ENCODE measurements at regions of chr1 and their contacts with region 1.

Region 1: DNA sequence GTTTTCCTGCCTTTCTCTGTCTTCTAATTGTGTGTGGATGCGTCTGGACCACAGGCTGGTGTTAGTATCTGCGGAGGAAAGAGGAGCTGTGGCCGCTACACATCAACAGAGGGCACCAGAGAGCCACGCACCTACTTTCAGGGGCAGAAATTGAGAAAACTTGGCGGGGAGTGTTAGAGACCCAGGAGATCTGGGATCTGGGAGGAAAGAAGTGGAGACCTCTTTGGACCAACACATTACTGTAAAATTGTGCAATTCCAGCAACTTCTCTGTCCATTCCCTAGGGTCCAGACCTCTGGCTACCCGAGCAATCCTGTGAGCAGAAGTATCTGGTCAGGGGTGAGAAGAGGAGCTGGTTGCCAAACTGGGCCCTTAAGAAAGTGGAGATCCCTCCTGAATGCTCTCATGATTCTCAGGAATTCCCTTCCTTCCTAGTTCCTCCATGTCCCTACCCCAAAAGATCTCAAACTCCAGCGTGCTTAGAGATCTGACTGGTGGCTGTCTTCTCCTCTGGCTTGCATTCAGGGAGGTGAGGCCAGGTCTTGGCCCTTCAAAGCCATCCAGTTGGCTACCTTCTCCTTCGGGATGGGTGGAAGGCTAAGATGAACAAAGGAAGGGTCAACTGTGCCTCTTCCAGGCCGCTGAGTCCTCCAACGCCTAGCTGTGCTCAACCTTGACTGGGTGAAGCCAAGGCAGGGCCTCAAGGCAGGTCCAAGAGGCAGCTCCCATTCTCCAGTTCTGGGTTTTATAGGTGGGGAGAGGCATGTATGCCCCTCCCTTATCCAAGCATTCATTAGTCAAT is 1.2 kb upstream of the KIRREL1 start:
- DNase-seq: peak; percentile 64
- ATAC-seq: peak; percentile 61
- H3K4me3 Mint-ChIP-seq: no peak overlapping the region
- H3K27ac Mint-ChIP-seq: no peak overlapping the region
- H3K4me1 Mint-ChIP-seq: no peaks in the 10 kb centered on the region
- H3K27me3 Mint-ChIP-seq: peaks cover 33% of the 10 kb centered on the region

Region 2: GRCh38 chr1:158013840-158014730 is 21.9 kb after region 1 on chr1:
- CTCF ChIA-PET with region 1: no interaction called
- POLR2A ChIA-PET with region 1: no interaction called
- DNase-seq: no peak
- ATAC-seq: no peak
- H3K4me3 Mint-ChIP-seq: no peak overlapping the region
- H3K27ac Mint-ChIP-seq: no peak overlapping the region
- H3K4me1 Mint-ChIP-seq: no peaks in the 10 kb centered on the region
- H3K27me3 Mint-ChIP-seq: no peaks in the 10 kb centered on the region

Region 3: GRCh38 chr1:158035976-158036583 is 43.8 kb after region 1 on chr1:
- CTCF ChIA-PET with region 1: interaction called, 20 read pairs
- POLR2A ChIA-PET with region 1: no interaction called
- DNase-seq: peak; percentile 24
- ATAC-seq: no peak
- H3K4me3 Mint-ChIP-seq: no peak overlapping the region
- H3K27ac Mint-ChIP-seq: no peak overlapping the region
- H3K4me1 Mint-ChIP-seq: no peaks in the 10 kb centered on the region
- H3K27me3 Mint-ChIP-seq: no peaks in the 10 kb centered on the region

Region 4: DNA sequence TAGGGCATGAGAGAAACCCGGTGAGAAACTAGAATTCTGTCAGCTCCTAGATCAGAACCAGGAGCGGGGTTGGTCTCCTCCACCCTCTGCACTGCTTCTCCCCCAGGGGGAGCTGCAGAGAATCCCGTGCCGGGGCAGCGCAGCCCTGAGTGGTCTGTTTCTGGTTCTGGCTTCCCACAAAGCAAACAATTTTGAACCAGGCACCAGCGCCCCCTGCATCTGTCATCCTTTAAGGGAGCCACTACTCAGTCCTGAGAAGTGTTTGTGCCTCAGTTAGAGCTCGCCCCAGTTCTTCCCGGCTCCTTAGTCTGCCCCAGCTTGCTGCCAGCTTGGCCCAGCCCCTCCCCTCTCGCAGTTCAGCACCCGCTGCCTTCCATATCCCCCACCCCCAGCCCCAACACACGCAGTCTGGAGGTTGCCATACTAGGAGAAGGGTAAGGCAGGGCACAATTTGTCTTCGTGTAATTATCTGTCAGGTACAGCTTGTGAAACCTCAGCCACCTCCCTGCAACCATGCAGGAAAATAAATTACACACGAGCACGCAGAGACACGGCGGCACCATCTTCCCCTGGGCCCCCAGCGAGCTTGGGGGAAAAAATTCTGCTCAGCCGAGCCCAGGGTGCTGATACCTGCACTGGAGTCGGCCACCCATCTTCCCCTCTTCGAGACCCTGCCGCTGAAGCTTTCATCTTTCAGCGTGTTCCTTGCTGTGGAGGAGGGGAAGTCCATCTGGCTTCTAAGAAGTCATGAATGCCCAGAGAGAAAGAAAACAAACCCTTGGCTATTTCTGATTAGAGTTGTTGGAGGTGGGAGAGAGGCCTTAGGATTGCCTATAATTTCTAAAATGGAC is 125.8 kb after region 1 on chr1:
- CTCF ChIA-PET with region 1: interaction called, 69 read pairs
- POLR2A ChIA-PET with region 1: no interaction called
- DNase-seq: peak; percentile 54
- ATAC-seq: peak; percentile 76
- H3K4me3 Mint-ChIP-seq: peak overlapping the region; percentile 17
- H3K27ac Mint-ChIP-seq: no peak overlapping the region
- H3K4me1 Mint-ChIP-seq: peaks cover 12% of the 10 kb centered on the region
- H3K27me3 Mint-ChIP-seq: peaks cover 46% of the 10 kb centered on the region

Region 5: DNA sequence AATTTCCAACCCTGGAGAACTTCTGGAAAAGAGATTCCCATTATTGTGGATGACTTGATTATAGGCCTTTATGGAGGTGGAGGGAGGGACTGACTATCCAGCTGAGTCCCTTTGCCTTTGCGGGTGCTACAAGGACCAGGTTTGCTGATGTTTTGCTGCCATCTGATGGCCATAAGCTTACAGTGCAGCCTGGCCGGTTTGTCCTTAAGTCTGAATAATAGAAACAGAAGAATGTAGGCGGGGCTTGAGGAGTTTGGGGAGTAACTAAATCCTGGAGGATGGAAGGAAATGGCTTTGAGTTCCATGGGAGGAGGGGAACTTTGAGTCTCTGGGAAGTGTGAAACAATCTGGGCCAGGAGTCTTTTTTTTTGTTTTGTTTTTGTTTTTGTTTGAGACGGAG is 132.8 kb after region 1 on chr1:
- CTCF ChIA-PET with region 1: interaction called, 69 read pairs
- POLR2A ChIA-PET with region 1: no interaction called
- DNase-seq: peak; percentile 82
- ATAC-seq: peak; percentile 90
- H3K4me3 Mint-ChIP-seq: no peak overlapping the region
- H3K27ac Mint-ChIP-seq: no peak overlapping the region
- H3K4me1 Mint-ChIP-seq: peaks cover 11% of the 10 kb centered on the region
- H3K27me3 Mint-ChIP-seq: peaks cover 25% of the 10 kb centered on the region